Mammary epithelial cell (primary cell): ENCODE measurements at regions of chr10 and their contacts with region 1.

Region 1: GRCh38 chr10:102917962-102918816 is at the start of gene CNNM2:
- DNase-seq: peak; percentile 99
- H3K4me3 ChIP-seq: peak within 1 kb of the TSS; percentile 91 to 99 (median 91)
- H3K27ac ChIP-seq: peak within 1 kb of the TSS; percentile 54
- H3K4me1 ChIP-seq: peaks cover 13% of the 10 kb centered on the region
- H3K27me3 ChIP-seq: no peaks in the 10 kb centered on the region
- CTCF ChIP-seq: no peak
- total RNA-seq, gene CNNM2: 4.5 to 5.5 TPM

Region 2: GRCh38 chr10:102743588-102744373 is 174.4 kb before region 1 on chr10 and contains the start of gene WBP1L:
- CTCF ChIA-PET with region 1: no interaction called
- dilution Hi-C with region 1: no loop called
- in situ Hi-C with region 1: no loop called
- intact Hi-C with region 1: loop called (anchors 5 kb)
- DNase-seq: peak; percentile 100
- H3K4me3 ChIP-seq: peak within 1 kb of the TSS; percentile 75 to 98 (median 88)
- H3K27ac ChIP-seq: peak within 1 kb of the TSS; percentile 45
- H3K4me1 ChIP-seq: peaks cover 6% of the 10 kb centered on the region
- H3K27me3 ChIP-seq: no peaks in the 10 kb centered on the region
- CTCF ChIP-seq: no peak
- total RNA-seq, gene WBP1L: 18.4 to 48.2 TPM

Region 3: GRCh38 chr10:103053659-103054581 is 135.7 kb after region 1 on chr10:
- CTCF ChIA-PET with region 1: no interaction called
- dilution Hi-C with region 1: no loop called
- in situ Hi-C with region 1: no loop called
- intact Hi-C with region 1: loop called (anchors 1 kb)
- DNase-seq: peak; percentile 68
- H3K4me3 ChIP-seq: peak overlapping the region in 1 of 3 experiments; percentile 25
- H3K27ac ChIP-seq: no peak overlapping the region
- H3K4me1 ChIP-seq: peaks cover 6% of the 10 kb centered on the region
- H3K27me3 ChIP-seq: no peaks in the 10 kb centered on the region
- CTCF ChIP-seq: peak in 1 of 2 donors; percentile 53

Region 4: GRCh38 chr10:103192451-103193106 is 274.4 kb after region 1 on chr10:
- CTCF ChIA-PET with region 1: no interaction called
- dilution Hi-C with region 1: no loop called
- in situ Hi-C with region 1: no loop called
- intact Hi-C with region 1: loop called (anchors 2 kb)
- DNase-seq: peak; percentile 73
- H3K4me3 ChIP-seq: peak overlapping the region; percentile 84 to 89 (median 88)
- H3K27ac ChIP-seq: peak overlapping the region; percentile 86
- H3K4me1 ChIP-seq: peaks cover 7% of the 10 kb centered on the region
- H3K27me3 ChIP-seq: no peaks in the 10 kb centered on the region
- CTCF ChIP-seq: no peak

Region 5: DNA sequence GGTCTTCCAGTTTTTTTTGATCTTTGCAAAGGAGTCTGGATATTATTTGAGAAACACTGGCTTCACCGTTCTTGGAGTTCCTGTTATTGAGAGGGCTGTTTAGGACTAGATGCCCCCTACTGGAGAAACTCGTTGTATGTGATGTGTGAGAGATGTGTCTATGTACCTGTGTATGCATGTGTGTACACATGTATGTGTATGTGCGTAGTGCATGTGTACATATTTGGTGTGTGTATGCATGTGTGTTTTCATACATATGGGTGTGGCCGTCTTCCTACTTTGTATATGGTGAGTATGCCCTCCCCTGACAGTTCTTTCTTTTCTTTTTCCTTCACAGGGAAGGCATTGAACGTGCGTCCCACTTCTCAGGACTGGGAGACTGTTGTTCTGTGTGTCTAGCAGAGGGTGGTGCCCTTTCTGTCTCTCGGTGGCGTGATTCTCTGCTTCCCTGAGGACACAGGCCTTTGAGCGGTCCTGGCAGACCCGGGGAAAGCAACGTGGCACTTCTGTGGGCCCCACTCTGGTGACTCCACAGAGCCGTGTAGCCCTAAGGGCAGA is 563.9 kb after region 1 on chr10:
- CTCF ChIA-PET with region 1: no interaction called
- dilution Hi-C with region 1: no loop called
- in situ Hi-C with region 1: no loop called
- intact Hi-C with region 1: loop called (anchors 1 kb)
- DNase-seq: peak; percentile 42
- H3K4me3 ChIP-seq: no peak overlapping the region
- H3K27ac ChIP-seq: no peak overlapping the region
- H3K4me1 ChIP-seq: peaks cover 14% of the 10 kb centered on the region
- H3K27me3 ChIP-seq: no peaks in the 10 kb centered on the region
- CTCF ChIP-seq: peak; percentile 72 to 86